Lower leg skin (tissue), 4 donors: ENCODE measurements at regions of chr12 and their contacts with region 1.

Region 1: DNA sequence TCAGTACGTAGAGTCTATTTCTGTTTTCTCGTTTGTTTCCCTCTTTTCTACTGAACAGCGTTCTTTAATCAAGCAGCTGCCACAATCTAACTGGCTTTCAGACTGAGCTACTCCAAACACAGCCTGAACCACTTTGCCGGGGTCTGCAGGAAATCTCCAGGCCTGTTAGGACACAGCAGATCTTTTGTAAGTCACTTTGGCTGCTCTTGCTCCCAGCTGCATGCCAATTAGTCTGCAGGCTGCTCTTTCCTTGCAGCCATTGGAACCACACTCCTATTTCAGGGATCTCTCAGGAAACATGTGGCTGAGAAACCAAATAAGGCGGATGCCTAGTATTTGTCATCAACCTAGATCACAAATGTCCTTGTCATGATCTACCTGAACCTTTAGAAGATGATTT is 73.6 kb downstream of the TMTC1 start:
- DNase-seq: peak in 1 of 2 donors; percentile 24
- H3K4me3 ChIP-seq: no peak overlapping the region
- CTCF ChIP-seq: no peak
- POLR2A ChIP-seq: no peak

Region 2: DNA sequence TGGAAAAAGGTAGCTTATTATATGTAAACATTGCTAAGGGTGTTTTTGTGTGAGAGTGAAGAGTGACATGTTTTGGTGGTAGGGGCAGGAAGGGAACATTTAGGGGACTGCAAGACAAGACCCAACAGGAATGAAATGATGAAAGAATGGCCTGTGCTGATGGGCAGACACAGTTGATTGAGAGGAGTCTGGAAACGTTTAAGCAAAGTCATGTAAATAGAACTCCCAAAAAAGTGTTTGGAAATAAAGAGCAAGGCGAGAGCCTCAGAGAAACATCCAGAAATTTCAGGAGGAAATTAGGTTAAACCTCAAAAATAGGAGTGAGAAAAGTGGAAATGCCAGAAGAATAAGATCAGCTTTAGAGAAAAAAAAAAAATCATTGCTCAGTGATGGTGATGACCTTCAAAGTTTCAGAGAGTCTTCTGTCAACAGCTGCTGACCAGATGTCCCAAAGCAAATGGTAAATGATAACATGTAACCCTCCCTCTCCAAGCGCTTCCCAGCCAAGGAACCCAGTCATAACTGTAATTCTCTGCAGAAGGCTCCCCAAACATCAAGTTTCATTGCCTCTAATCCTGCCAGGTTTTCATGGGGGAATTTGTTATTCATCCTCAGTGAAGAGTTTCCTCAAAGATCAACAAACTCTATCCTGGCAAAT is 784.3 kb before region 1 on chr12:
- intact Hi-C with region 1: no loop called
- DNase-seq: peak in 1 of 2 donors; percentile 82
- H3K4me3 ChIP-seq: no peak overlapping the region
- CTCF ChIP-seq: no peak
- POLR2A ChIP-seq: no peak

Region 3: GRCh38 chr12:29756741-29757390 is 46.8 kb after region 1 on chr12:
- intact Hi-C with region 1: loop called (anchors 1 kb)
- DNase-seq: no peak
- H3K4me3 ChIP-seq: no peak overlapping the region
- CTCF ChIP-seq: no peak
- POLR2A ChIP-seq: no peak

Region 4: GRCh38 chr12:29796823-29797263 is 86.7 kb after region 1 on chr12:
- intact Hi-C with region 1: no loop called
- DNase-seq: peak in 1 of 2 donors; percentile 46
- H3K4me3 ChIP-seq: no peak overlapping the region
- CTCF ChIP-seq: no peak
- POLR2A ChIP-seq: no peak